WTC11 (cell line): ENCODE measurements at regions of chr19 and their contacts with region 1.

Region 1: DNA sequence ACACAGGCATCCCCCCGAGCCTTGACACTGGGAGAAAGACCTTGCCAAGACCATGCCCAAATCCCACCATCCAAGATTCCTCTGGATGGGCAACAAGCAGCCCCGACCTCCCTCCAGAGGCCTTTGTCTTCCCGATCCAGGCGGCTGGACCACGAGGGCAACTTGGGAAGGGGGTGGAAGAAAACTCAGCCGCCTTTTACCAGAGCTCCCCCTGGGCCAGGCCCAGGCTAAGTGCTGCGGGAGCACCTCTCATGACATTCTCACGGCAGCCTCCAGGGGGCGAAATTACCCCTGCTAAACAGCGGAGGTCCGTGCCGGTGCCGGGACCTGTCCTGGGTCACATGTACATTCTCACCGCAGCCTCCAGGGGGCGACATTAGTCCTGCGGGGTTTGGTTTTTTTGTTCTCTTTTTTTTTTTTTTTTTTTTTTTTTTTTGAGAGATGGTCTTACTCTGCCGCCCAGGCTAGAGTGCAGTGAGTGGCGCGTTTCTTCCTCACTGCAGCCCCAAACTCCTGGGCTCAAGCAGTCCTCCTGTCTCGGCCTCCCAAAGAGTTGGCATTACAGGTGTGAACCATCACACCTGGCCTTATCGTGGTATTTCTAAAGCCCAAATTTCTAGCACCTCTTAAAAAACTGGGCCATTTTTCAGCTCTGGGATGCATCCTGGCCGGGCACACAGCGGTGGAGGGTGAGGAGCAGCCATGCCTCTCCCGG is 2.1 kb upstream of the RSPH6A start:
- DNase-seq: peak; percentile 100
- ATAC-seq: peak; percentile 72
- H3K4me3 Mint-ChIP-seq: peak overlapping the region; percentile 89
- H3K27ac Mint-ChIP-seq: peak overlapping the region; percentile 83; the same call in 1 of the 2 replicates
- H3K4me1 Mint-ChIP-seq: peaks cover 37% of the 10 kb centered on the region
- H3K27me3 Mint-ChIP-seq: no peaks in the 10 kb centered on the region; the same call in none of the 2 replicates
- CTCF ChIP-seq: peak; percentile 98

Region 2: GRCh38 chr19:45577111-45577905 is 239.9 kb before region 1 on chr19:
- CTCF ChIA-PET with region 1: no interaction called
- POLR2A ChIA-PET with region 1: no interaction called
- DNase-seq: no peak
- ATAC-seq: peak; percentile 83
- H3K4me3 Mint-ChIP-seq: peak overlapping the region; percentile 20
- H3K27ac Mint-ChIP-seq: peak overlapping the region; percentile 91
- H3K4me1 Mint-ChIP-seq: peaks cover 25% of the 10 kb centered on the region
- H3K27me3 Mint-ChIP-seq: no peaks in the 10 kb centered on the region
- CTCF ChIP-seq: no peak

Region 3: GRCh38 chr19:45607071-45608029 is 209.8 kb before region 1 on chr19:
- CTCF ChIA-PET with region 1: no interaction called
- POLR2A ChIA-PET with region 1: no interaction called
- DNase-seq: peak; percentile 90
- ATAC-seq: peak; percentile 85
- H3K4me3 Mint-ChIP-seq: peak overlapping the region; percentile 77
- H3K27ac Mint-ChIP-seq: no peak overlapping the region; the same call in 1 of the 2 replicates
- H3K4me1 Mint-ChIP-seq: peaks cover 10% of the 10 kb centered on the region; the same call in 1 of the 2 replicates
- H3K27me3 Mint-ChIP-seq: peaks cover 19% of the 10 kb centered on the region
- CTCF ChIP-seq: peak; percentile 80

Region 4: GRCh38 chr19:45681391-45682015 is 135.7 kb before region 1 on chr19:
- CTCF ChIA-PET with region 1: interaction called, 13 read pairs
- POLR2A ChIA-PET with region 1: no interaction called
- DNase-seq: peak; percentile 93
- ATAC-seq: peak; percentile 53
- H3K4me3 Mint-ChIP-seq: peak overlapping the region; percentile 65
- H3K27ac Mint-ChIP-seq: no peak overlapping the region
- H3K4me1 Mint-ChIP-seq: peaks cover 14% of the 10 kb centered on the region
- H3K27me3 Mint-ChIP-seq: peaks cover 38% of the 10 kb centered on the region
- CTCF ChIP-seq: peak; percentile 96

Region 5: GRCh38 chr19:45770192-45771101 is 46.7 kb before region 1 on chr19:
- CTCF ChIA-PET with region 1: interaction called, 135 read pairs
- POLR2A ChIA-PET with region 1: interaction called, 47 read pairs
- DNase-seq: peak; percentile 97
- ATAC-seq: peak; percentile 73
- H3K4me3 Mint-ChIP-seq: peak overlapping the region; percentile 97
- H3K27ac Mint-ChIP-seq: peak overlapping the region; percentile 97
- H3K4me1 Mint-ChIP-seq: peaks cover 13% of the 10 kb centered on the region
- H3K27me3 Mint-ChIP-seq: peaks cover 5% of the 10 kb centered on the region; the same call in 1 of the 2 replicates
- CTCF ChIP-seq: peak; percentile 98

Region 6: GRCh38 chr19:45798995-45799517 is 18.1 kb before region 1 on chr19:
- CTCF ChIA-PET with region 1: interaction called, 133 read pairs
- POLR2A ChIA-PET with region 1: interaction called, 4 read pairs
- DNase-seq: peak; percentile 75
- ATAC-seq: peak; percentile 86
- H3K4me3 Mint-ChIP-seq: no peak overlapping the region; the same call in 1 of the 2 replicates
- H3K27ac Mint-ChIP-seq: no peak overlapping the region
- H3K4me1 Mint-ChIP-seq: peaks cover 6% of the 10 kb centered on the region
- H3K27me3 Mint-ChIP-seq: peaks cover 57% of the 10 kb centered on the region
- CTCF ChIP-seq: peak; percentile 71

Region 7: DNA sequence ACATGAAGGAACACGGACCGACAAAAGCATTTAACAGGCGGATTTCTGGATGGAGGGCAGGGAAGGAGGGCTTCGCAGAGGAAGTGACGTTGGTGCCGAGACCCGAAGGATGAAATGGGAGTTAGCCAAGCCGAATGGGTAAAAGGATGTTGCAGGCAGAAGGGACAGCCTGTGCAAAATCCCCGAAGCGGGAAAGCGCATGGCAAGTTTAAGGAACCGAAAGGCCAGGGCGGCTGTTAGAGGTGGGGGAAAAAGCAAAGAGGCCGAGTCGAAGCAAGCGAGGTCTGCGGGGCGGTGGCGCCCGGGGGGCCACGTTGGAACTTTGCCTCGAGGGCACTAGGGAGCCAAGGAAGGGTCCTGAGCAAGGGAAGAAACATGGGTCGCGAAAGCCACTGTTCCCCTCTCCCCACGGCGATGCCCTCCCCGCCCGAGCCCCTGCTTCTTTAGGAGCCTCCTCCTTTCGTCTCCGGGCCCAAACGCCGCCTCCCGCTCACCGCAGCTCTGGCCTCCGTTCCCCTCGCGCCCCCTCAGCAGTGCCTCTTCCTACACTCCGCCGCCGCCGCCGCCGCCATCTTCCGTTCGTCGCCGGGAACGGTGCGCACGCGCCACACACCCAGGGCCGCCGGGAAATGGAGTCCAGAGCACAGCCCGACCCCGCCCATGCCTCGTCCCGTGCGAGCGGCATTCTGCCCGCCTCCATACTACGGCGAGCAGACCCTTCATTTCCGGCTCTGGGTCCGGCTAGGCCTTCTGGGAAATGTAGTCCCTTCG is 45.6 kb after region 1 on chr19 and contains the start of gene SYMPK:
- CTCF ChIA-PET with region 1: interaction called, 86 read pairs
- POLR2A ChIA-PET with region 1: interaction called, 16 read pairs
- DNase-seq: peak; percentile 99
- ATAC-seq: peak; percentile 93
- H3K4me3 Mint-ChIP-seq: peak within 1 kb of the TSS; percentile 89
- H3K27ac Mint-ChIP-seq: peak within 1 kb of the TSS; percentile 99
- H3K4me1 Mint-ChIP-seq: peaks cover 40% of the 10 kb centered on the region
- H3K27me3 Mint-ChIP-seq: no peaks in the 10 kb centered on the region
- CTCF ChIP-seq: no peak
- total RNA-seq, gene SYMPK: 105 to 111 TPM (median 106 TPM) in 3 replicates

Region 8: GRCh38 chr19:45922281-45922680 is 105.1 kb after region 1 on chr19:
- CTCF ChIA-PET with region 1: interaction called, 11 read pairs
- POLR2A ChIA-PET with region 1: no interaction called
- DNase-seq: peak; percentile 61
- ATAC-seq: peak; percentile 97
- H3K4me3 Mint-ChIP-seq: no peak overlapping the region
- H3K27ac Mint-ChIP-seq: no peak overlapping the region
- H3K4me1 Mint-ChIP-seq: peaks cover 2% of the 10 kb centered on the region; the same call in 1 of the 2 replicates
- H3K27me3 Mint-ChIP-seq: peaks cover 16% of the 10 kb centered on the region
- CTCF ChIP-seq: peak; percentile 38; the same call in 1 of the 2 replicates

Region 9: DNA sequence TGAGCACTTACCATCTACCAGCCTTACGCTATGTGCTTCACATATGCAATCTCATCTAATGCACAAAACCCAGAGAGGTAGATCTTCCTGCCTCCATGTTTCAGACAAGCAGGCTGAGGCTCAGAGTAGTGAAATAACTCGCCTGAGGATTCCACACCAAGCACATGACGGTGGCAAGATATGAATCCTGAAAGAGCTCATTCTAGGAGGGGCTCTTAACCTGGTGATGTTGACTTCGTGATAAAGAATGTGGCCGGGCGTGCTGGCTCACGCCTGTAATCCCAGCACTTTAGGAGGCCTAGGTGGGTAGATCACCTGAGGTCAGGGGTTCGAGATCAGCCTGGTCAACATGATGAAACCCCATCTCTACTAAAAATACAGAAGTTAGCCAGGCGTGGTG is 151.5 kb after region 1 on chr19:
- CTCF ChIA-PET with region 1: no interaction called
- POLR2A ChIA-PET with region 1: no interaction called
- DNase-seq: no peak
- ATAC-seq: no peak
- H3K4me3 Mint-ChIP-seq: no peak overlapping the region
- H3K27ac Mint-ChIP-seq: no peak overlapping the region
- H3K4me1 Mint-ChIP-seq: peaks cover 24% of the 10 kb centered on the region
- H3K27me3 Mint-ChIP-seq: peaks cover 72% of the 10 kb centered on the region
- CTCF ChIP-seq: no peak

Region 10: GRCh38 chr19:46030812-46031550 is 213.8 kb after region 1 on chr19:
- CTCF ChIA-PET with region 1: interaction called, 10 read pairs
- POLR2A ChIA-PET with region 1: no interaction called
- DNase-seq: no peak
- ATAC-seq: no peak
- H3K4me3 Mint-ChIP-seq: no peak overlapping the region
- H3K27ac Mint-ChIP-seq: no peak overlapping the region
- H3K4me1 Mint-ChIP-seq: no peaks in the 10 kb centered on the region
- H3K27me3 Mint-ChIP-seq: no peaks in the 10 kb centered on the region; the same call in 1 of the 2 replicates
- CTCF ChIP-seq: no peak